Transverse colon (tissue), 4 donors: ENCODE measurements at regions of chr3 and their contacts with region 1.

Region 1: DNA sequence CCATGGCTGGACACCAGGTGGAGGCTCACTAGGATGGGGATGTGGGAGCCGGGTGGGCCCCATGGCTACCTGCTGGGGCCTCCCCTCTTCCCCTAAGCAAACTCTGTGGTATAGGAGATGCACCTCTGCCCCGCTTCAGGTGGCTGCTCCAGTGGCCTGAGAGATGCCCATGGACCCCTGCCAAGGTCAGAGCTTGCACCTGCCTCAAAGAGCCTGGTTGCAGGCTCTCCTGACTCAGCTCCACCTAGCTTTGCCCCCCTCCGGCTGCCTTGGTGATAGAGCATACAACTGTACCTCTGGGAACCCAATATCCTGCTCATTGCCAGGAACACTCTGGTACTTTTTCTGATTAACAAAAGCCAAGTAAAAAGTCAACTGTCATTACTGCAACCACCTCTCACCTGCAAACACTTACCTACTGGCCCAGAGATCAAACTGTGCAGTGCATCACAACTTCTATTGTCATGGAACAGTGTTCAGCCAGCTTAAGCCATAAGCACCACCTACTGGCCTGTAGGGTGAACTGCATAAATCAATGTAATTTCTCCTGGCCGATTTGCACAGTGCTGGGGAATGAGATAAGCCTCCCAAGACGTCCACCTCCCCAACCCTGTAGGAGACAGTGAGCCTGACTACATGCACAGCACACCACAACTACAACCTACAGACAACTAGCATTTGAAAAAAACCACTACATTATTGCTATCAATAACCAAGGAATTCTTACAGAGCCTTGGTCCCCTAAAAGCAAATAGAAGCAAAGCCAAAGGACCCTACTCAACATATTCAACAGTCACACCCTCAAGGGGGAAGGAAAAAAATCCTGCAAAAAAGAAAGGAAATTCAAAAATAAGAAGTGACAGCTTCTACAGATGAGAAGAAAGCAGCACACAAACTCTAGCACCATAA is 352.4 kb upstream of the ARHGEF26 start:
- DNase-seq: peak; percentile 39
- H3K4me3 ChIP-seq: no peak overlapping the region
- H3K27ac ChIP-seq: no peak overlapping the region
- H3K4me1 ChIP-seq: no peaks in the 10 kb centered on the region
- H3K27me3 ChIP-seq: no peaks in the 10 kb centered on the region
- CTCF ChIP-seq: peak; percentile 79 to 87 (median 84)
- EP300 ChIP-seq: no peak
- POLR2A ChIP-seq: no peak

Region 2: DNA sequence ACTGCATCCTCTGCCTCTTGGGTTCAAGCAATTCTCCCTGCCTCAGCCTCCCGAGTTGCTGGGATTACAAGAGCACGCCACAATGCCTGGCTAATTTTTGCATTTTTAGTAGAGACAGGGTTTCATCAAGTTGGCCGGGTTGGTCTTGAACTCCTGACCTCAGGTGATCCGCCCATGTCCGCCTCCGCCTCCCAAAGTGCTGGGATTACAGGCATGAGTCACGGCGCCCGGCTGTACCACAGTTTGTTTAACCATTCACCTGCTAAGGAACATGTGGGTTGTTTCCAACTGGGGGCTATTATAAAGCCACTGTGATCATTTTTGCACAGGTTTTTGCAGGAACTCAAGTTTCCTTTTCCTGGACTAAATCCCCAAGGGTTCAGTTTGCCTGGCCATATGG is 730.0 kb before region 1 on chr3:
- in situ Hi-C with region 1: loop called (anchors 10 to 25 kb)
- intact Hi-C with region 1: loop called (anchors 2 kb)
- DNase-seq: peak; percentile 23
- H3K4me3 ChIP-seq: no peak overlapping the region
- H3K27ac ChIP-seq: no peak overlapping the region
- H3K4me1 ChIP-seq: peaks cover 0 to 18% (median 2%) of the 10 kb centered on the region in 4 donors
- H3K27me3 ChIP-seq: no peaks in the 10 kb centered on the region
- CTCF ChIP-seq: no peak
- EP300 ChIP-seq: no peak
- POLR2A ChIP-seq: no peak

Region 3: GRCh38 chr3:153043729-153044328 is 725.0 kb before region 1 on chr3:
- in situ Hi-C with region 1: loop called (anchors 10 to 25 kb)
- intact Hi-C with region 1: loop called (anchors 2 kb)
- DNase-seq: no peak
- H3K4me3 ChIP-seq: peak overlapping the region in 1 of 4 donors; percentile 42
- H3K27ac ChIP-seq: no peak overlapping the region
- H3K4me1 ChIP-seq: peaks cover 0 to 14% (median 2%) of the 10 kb centered on the region in 4 donors
- H3K27me3 ChIP-seq: no peaks in the 10 kb centered on the region
- CTCF ChIP-seq: no peak
- EP300 ChIP-seq: no peak
- POLR2A ChIP-seq: no peak

Region 4: DNA sequence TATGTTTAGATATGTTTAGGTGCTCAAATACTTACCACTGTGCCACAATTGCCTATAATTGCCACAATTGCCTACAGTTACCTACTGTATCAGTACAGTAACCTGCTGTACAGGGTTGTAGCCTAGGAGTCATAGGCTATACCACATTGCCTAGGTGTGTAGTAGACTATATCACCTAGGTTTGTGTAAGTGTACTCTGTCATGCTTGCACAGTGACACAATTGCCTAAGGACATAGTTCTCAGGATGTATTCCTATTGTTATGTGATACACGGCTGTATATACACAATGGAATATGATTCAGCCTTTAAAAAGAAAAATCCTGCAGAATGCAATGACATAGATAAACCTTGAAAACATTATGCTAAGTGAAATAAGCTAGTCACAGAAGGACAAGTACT is 342.0 kb before region 1 on chr3:
- in situ Hi-C with region 1: no loop called
- intact Hi-C with region 1: no loop called
- DNase-seq: no peak
- H3K4me3 ChIP-seq: no peak overlapping the region
- H3K27ac ChIP-seq: no peak overlapping the region
- H3K4me1 ChIP-seq: no peaks in the 10 kb centered on the region
- H3K27me3 ChIP-seq: no peaks in the 10 kb centered on the region
- CTCF ChIP-seq: no peak
- EP300 ChIP-seq: no peak
- POLR2A ChIP-seq: no peak

Region 5: DNA sequence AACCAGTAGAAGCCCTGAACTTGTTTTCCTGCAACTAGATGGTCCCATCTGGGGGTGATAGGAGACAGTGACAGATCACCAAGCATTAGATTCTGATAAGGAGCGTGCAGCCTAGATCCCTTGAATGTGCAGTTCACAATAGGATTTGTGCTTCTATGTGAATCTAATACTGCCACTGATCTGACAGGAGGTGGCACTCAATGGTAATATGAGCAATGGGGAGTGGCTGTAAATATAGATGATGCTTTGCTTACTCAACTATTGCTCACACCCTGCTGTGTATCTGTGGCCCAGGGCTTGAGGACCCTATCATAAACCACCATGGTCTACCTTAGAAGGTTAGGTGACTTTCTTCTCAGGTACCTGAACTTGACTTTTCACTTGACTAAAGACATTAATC is 64.7 kb before region 1 on chr3:
- in situ Hi-C with region 1: loop called in 1 of 4 experiments (anchors 10 kb)
- intact Hi-C with region 1: no loop called
- DNase-seq: no peak
- H3K4me3 ChIP-seq: no peak overlapping the region
- H3K27ac ChIP-seq: no peak overlapping the region
- H3K4me1 ChIP-seq: no peaks in the 10 kb centered on the region
- H3K27me3 ChIP-seq: no peaks in the 10 kb centered on the region
- CTCF ChIP-seq: peak in 3 of 5 experiments; percentile 13 to 36 (median 17)
- EP300 ChIP-seq: no peak
- POLR2A ChIP-seq: no peak

Region 6: GRCh38 chr3:154121701-154122556 is 353.1 kb after region 1 on chr3:
- in situ Hi-C with region 1: no loop called
- intact Hi-C with region 1: no loop called
- DNase-seq: peak; percentile 38
- H3K4me3 ChIP-seq: peak overlapping the region; percentile 56 to 93 (median 74)
- H3K27ac ChIP-seq: peak overlapping the region; percentile 78 to 88 (median 83)
- H3K4me1 ChIP-seq: peaks cover 5 to 31% (median 15%) of the 10 kb centered on the region in 4 donors
- H3K27me3 ChIP-seq: peaks cover 7% of the 10 kb centered on the region
- CTCF ChIP-seq: peak in 1 of 5 experiments; percentile 13
- EP300 ChIP-seq: no peak
- POLR2A ChIP-seq: no peak